Right ventricle myocardium superior (tissue), 1 donor: ENCODE measurements at regions of chr2 and their contacts with region 1.

Region 1: DNA sequence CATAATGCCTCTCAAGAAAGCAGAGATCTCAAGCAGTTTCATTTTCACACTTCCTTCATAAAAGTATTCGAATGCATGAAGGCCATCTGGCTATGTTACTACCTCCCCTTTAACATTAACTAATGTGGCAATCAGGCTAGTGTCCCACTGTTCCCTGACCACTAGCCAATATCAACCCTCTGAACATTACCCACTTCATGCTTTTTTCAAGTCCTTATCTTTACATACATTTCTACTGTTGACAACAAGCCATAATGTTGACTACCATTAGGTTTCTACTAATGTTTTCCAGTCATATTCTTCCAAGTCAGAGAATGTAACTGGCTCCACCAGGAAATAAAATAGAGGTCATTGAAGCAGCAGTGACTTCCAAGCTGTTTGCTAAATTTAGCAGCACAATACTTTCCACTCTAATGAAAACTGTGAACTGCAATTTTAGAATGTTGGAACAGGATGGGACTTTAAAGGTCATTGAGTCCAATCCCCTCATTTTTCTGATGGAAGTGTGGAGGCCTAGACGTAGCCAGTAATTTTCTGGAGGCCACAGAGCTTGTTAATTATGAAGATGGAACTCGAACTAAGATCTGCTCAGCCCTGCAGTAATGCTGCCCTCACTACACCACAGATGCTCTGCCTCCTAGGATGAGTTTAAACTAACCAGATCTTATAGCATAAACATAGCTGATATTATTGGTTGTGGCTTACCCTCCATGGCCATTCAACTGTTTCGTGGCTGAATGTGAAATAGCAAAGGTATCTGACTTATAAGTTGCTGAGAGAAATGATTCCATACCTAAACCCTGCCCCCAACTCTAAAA is 630 bp upstream of the PPP1R1C start:
- DNase-seq: no peak
- ATAC-seq: peak; percentile 72

Region 2: GRCh38 chr2:182049372-182050148 is 64.5 kb after region 1 on chr2:
- intact Hi-C with region 1: loop called (anchors 10 kb)
- DNase-seq: no peak
- ATAC-seq: peak; percentile 77